Calu3 (cell line): ENCODE measurements at regions of chr6 and their contacts with region 1.

Region 1: DNA sequence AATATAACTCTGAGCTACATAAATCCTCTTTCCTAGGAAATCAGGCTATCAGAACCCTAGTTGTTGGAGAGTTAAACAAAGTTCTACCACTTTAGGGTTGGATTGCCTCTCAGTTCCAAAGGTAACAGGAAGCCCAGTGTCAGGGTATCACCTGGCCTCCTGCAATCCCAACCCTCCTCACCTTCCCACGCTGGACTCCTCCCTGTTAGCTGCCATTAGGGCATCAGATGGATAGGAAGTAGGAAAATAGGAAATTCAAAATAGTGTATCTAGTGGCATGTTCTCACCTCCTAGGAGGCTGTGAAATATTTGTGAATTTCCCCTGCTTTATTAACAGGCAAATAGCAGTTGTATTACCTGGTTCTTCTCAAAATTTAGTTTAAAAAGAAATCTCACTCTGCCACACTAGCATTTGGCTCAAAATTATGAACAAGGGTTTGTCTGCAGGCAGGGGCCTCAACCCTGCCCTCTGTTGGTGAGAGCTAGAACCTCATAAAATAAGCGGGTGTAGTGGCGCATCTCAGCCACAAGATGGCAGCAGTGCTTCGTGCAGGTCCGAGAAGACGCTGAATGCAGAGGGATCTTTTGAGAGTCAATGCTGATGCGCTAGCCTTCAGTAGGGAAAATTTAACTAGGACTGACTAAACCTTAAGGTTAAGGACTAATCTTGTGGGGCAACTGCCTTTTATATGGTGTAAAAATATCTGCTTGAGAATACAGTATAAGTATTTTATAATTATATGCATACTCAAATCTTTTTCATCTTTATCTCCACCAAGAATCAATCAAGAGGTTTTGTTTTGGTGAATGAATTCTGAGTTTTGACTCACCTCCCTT is 209.8 kb upstream of the KCNQ5 start:
- DNase-seq: peak; percentile 80
- H3K4me3 Mint-ChIP-seq: no peak overlapping the region
- H3K27ac Mint-ChIP-seq: no peak overlapping the region
- H3K4me1 Mint-ChIP-seq: no peaks in the 10 kb centered on the region
- H3K27me3 Mint-ChIP-seq: no peaks in the 10 kb centered on the region
- CTCF ChIP-seq: peak; percentile 100

Region 2: GRCh38 chr6:71621918-71622519 is 790.1 kb before region 1 on chr6:
- CTCF ChIA-PET with region 1: no interaction called
- intact Hi-C with region 1: loop called (anchors 1 kb)
- DNase-seq: no peak
- H3K4me3 Mint-ChIP-seq: no peak overlapping the region
- H3K27ac Mint-ChIP-seq: no peak overlapping the region
- H3K4me1 Mint-ChIP-seq: peaks cover 8% of the 10 kb centered on the region
- H3K27me3 Mint-ChIP-seq: no peaks in the 10 kb centered on the region
- CTCF ChIP-seq: peak; percentile 72

Region 3: DNA sequence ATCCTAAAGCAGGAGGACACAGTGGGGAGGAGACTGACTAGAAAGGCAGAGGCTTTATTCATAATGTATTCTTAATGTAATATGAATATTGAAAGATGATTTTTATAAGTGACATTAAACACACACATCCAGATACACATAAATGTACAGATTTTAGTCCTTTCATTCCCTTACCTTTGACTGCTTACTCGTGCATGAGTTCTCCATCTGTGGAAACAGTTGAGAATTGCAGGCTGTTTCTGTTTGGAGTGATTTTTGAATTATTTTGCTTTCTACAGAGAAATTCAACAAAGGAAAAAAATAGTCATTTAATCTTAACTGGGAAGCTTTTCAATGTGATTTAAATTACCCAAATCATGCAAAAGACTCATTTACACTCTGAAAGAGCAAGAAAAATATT is 389.3 kb before region 1 on chr6:
- CTCF ChIA-PET with region 1: no interaction called
- intact Hi-C with region 1: no loop called
- DNase-seq: no peak
- H3K4me3 Mint-ChIP-seq: no peak overlapping the region
- H3K27ac Mint-ChIP-seq: no peak overlapping the region
- H3K4me1 Mint-ChIP-seq: no peaks in the 10 kb centered on the region
- H3K27me3 Mint-ChIP-seq: no peaks in the 10 kb centered on the region
- CTCF ChIP-seq: no peak

Region 4: DNA sequence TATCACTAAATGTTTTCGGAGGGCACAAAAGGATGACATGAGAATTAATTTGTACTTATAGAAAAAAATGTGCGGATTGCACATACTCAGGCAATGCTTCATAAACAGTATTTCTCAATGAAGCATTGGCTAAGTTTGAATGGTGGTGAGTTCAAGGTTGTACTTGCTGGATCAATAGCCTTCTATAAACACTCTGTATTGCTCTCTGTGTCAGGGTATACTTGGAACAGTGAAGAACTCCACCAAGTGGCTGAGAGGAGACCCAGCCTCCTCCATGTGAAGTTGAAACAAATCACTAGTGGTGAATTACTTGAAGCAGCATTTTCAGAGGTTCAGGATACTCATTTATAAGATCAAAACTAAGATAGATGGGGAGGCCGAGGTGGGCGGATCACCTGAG is 165.2 kb before region 1 on chr6:
- CTCF ChIA-PET with region 1: no interaction called
- intact Hi-C with region 1: loop called (anchors 2 kb)
- DNase-seq: peak; percentile 10
- H3K4me3 Mint-ChIP-seq: no peak overlapping the region
- H3K27ac Mint-ChIP-seq: no peak overlapping the region
- H3K4me1 Mint-ChIP-seq: peaks cover 9% of the 10 kb centered on the region
- H3K27me3 Mint-ChIP-seq: no peaks in the 10 kb centered on the region
- CTCF ChIP-seq: no peak

Region 5: DNA sequence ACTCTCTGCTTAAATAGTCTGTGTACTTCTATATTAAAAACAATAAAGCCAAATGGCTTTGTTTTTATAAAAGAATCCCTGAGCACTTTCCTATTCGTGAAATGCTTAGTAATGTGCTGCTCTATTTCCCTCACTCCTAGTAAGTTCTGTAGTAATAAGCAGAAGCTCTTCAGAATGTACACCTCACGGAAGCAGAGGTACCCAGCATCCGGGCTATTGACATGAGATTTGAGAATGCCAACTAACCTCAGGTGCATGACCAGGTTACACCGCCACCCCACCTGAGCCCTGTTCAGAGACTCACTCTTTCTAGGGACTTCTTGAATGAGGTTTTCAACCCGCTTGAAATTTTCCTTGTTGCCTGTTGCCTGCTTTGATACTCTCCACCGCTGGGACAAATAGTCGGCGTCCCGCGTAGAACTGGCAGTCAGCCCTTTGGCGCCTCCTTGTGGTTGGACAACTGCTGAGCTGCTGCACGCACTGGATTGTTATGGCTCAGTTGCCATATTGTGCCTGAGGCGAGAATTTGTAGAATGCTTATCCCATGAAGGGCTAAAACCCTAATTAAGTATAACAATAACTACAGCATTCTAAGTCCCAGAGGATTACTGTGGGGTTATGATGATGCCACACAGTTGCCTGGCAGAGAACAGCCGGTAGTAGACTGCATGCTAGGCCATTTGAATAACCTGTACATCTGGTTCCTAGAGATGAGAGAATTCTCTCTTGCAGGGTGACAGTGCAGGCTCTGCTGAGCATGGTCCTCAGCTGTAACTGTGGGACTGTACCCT is 717.8 kb after region 1 on chr6:
- CTCF ChIA-PET with region 1: interaction called, 4 read pairs
- intact Hi-C with region 1: loop called (anchors 2 kb)
- DNase-seq: peak; percentile 89
- H3K4me3 Mint-ChIP-seq: peak overlapping the region; percentile 50
- H3K27ac Mint-ChIP-seq: no peak overlapping the region
- H3K4me1 Mint-ChIP-seq: no peaks in the 10 kb centered on the region
- H3K27me3 Mint-ChIP-seq: no peaks in the 10 kb centered on the region
- CTCF ChIP-seq: peak; percentile 97